Upper lobe of right lung (tissue), 1 donor: ENCODE measurements at regions of chr11 and their contacts with region 1.

Region 1: GRCh38 chr11:31387379-31387778 is 17.7 kb downstream of the DNAJC24 start:
- DNase-seq: no peak
- ATAC-seq: no peak
- H3K4me3 ChIP-seq: no peak overlapping the region
- H3K27ac ChIP-seq: no peak overlapping the region
- H3K4me1 ChIP-seq: no peaks in the 10 kb centered on the region
- H3K27me3 ChIP-seq: no peaks in the 10 kb centered on the region
- CTCF ChIP-seq: no peak

Region 2: GRCh38 chr11:32176223-32176934 is 789.0 kb after region 1 on chr11:
- intact Hi-C with region 1: loop called (anchors 5 kb)
- DNase-seq: no peak
- ATAC-seq: peak; percentile 92
- H3K4me3 ChIP-seq: no peak overlapping the region
- H3K27ac ChIP-seq: no peak overlapping the region
- H3K4me1 ChIP-seq: peaks cover 6% of the 10 kb centered on the region
- H3K27me3 ChIP-seq: no peaks in the 10 kb centered on the region
- CTCF ChIP-seq: peak; percentile 93